ENCODE measurements at regions of chr6 and their contacts with region 1.

Region 1: DNA sequence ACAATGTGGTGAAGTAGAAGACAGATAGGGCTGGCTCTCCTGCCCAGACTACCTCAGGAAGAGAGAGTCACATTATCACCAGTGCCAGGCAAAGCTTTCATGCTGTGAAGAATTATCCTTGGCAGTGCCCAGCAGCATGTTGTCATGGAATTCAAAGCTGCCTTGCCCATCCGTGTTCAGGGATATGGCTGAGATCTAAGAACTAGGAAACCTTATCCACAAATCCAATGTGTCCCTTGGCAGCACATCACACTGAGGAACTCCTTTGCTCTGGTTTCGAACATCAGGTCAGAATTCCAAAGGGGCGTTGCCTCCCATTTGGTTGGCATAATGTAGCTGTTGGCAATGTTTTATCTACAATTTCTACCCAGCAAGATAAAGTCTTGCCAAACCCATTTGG is 52.7 kb downstream of the ADGRF1 start:
- DNase-seq: no peak
- ATAC-seq: no peak
- H3K4me3 ChIP-seq: no peak overlapping the region
- H3K27ac ChIP-seq: peak overlapping the region in 1 of 2 donors; percentile 72
- H3K4me1 ChIP-seq: peaks cover 16 to 35% of the 10 kb centered on the region in 2 donors
- H3K27me3 ChIP-seq: no peaks in the 10 kb centered on the region
- CTCF ChIP-seq: no peak

Region 2: DNA sequence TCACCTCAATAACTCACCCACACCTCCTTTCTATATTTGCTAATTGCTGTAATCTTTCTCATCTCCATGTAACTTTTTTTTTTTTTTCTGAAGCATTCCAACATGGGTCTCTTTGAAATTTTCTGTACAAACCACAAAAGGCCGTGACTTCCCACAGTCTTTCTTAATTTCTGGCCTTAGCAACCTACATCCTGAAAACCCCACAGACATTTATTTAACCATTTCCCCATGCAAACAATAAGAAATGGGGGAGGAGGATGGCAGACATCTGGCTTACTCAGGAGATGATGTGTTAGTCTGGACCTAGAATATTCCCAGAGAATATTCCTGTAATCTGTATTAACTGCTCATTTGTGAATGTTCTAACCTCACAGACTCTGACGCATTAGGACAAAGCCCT is 138.6 kb before region 1 on chr6:
- intact Hi-C with region 1: loop called in 1 of 2 experiments (anchors 5 kb)
- DNase-seq: no peak
- ATAC-seq: no peak
- H3K4me3 ChIP-seq: no peak overlapping the region
- H3K27ac ChIP-seq: no peak overlapping the region
- H3K4me1 ChIP-seq: peaks cover 0 to 34% of the 10 kb centered on the region in 2 donors
- H3K27me3 ChIP-seq: no peaks in the 10 kb centered on the region
- CTCF ChIP-seq: no peak

Region 3: DNA sequence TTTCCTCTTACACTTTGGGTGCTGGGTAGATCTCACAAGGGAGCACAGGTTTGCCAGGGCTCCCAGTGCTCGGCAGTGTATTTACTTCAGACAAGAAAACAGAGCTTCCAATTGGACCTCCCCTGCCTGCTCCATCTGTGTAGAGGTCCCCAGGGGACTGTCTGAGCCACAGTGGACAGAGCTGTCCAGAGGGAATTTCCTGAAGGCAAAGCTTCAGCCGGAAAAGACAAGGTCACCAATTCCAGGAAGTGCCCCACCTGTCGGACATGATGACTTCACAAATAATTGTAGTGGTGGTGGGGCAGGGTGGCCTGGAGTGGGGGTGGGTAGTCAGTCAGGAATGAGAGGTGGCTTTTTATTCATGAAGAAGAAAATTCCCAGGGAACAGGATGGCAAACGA is 86.2 kb before region 1 on chr6:
- intact Hi-C with region 1: no loop called
- DNase-seq: no peak
- ATAC-seq: peak; percentile 7
- H3K4me3 ChIP-seq: no peak overlapping the region
- H3K27ac ChIP-seq: peak overlapping the region; percentile 19 to 45
- H3K4me1 ChIP-seq: peaks cover 33 to 54% of the 10 kb centered on the region in 2 donors
- H3K27me3 ChIP-seq: no peaks in the 10 kb centered on the region
- CTCF ChIP-seq: no peak

Region 4: DNA sequence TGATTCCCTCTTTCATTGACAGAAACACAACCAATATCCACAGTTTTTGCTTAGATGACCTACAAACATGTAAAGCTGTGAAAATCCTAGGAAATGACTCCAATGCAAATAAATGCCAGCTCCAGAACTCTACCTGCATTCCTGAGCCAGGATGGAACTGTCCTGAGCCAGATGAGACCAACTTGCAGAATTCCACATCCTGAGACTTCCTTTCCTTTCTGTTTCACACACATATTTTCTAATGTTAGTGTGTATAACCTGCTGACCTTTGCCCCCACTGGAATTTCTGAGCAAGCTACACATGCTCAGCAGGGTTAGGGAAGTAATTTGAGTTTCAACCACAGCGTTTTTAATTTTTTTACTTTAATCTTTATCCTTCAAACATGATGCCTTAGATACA is 122.3 kb after region 1 on chr6:
- intact Hi-C with region 1: no loop called
- DNase-seq: no peak
- ATAC-seq: no peak
- H3K4me3 ChIP-seq: no peak overlapping the region
- H3K27ac ChIP-seq: no peak overlapping the region
- H3K4me1 ChIP-seq: no peaks in the 10 kb centered on the region
- H3K27me3 ChIP-seq: no peaks in the 10 kb centered on the region
- CTCF ChIP-seq: no peak

Measured in left lung (tissue), 14 donors.